ENCODE measurements at regions of chr1 and their contacts with region 1.

Region 1: GRCh38 chr1:173824331-173825081 is at the starts of genes CENPL and DARS2:
- DNase-seq: peak; percentile 67 to 93 (median 91)
- ATAC-seq: peak; percentile 94
- H3K4me3 ChIP-seq: peak within 1 kb of the TSS; percentile 99
- H3K4me3 Mint-ChIP-seq: peak within 1 kb of the TSS; percentile 87 to 99 (median 94)
- H3K27ac ChIP-seq: peak within 1 kb of the TSS; percentile 80
- H3K27ac Mint-ChIP-seq: peak within 1 kb of the TSS; percentile 91 to 98 (median 96)
- H3K4me1 ChIP-seq: peaks cover 10 to 14% of the 10 kb centered on the region in 2 donors
- H3K4me1 Mint-ChIP-seq: peaks cover 32 to 68% (median 50%) of the 10 kb centered on the region in 7 donors
- H3K27me3 ChIP-seq: no peaks in the 10 kb centered on the region
- H3K27me3 Mint-ChIP-seq: no peaks in the 10 kb centered on the region
- total RNA-seq, gene CENPL: 5.2 to 25.1 (median 9.5) TPM
- total RNA-seq, gene DARS2: 3.6 to 26.0 (median 13.5) TPM

Region 2: GRCh38 chr1:172761581-172762025 is 1062.9 kb before region 1 on chr1:
- CTCF ChIA-PET with region 1: no interaction called
- POLR2A ChIA-PET with region 1: no interaction called
- intact Hi-C with region 1: loop called in 1 of 2 experiments (anchors 5 kb)
- DNase-seq: no peak
- ATAC-seq: no peak
- H3K4me3 ChIP-seq: no peak overlapping the region
- H3K4me3 Mint-ChIP-seq: no peak overlapping the region
- H3K27ac ChIP-seq: no peak overlapping the region
- H3K27ac Mint-ChIP-seq: no peak overlapping the region
- H3K4me1 ChIP-seq: peaks cover 0 to 25% of the 10 kb centered on the region in 2 donors
- H3K4me1 Mint-ChIP-seq: peaks cover 3 to 58% (median 44%) of the 10 kb centered on the region in 7 donors
- H3K27me3 ChIP-seq: no peaks in the 10 kb centered on the region
- H3K27me3 Mint-ChIP-seq: peaks cover 0 to 28% (median 0%) of the 10 kb centered on the region in 5 donors

Region 3: GRCh38 chr1:173202430-173203145 is 621.9 kb before region 1 on chr1:
- CTCF ChIA-PET with region 1: no interaction called
- POLR2A ChIA-PET with region 1: no interaction called
- intact Hi-C with region 1: loop called in 1 of 2 experiments (anchors 5 kb)
- DNase-seq: peak in 1 of 9 donors; percentile 8
- ATAC-seq: no peak
- H3K4me3 ChIP-seq: no peak overlapping the region
- H3K4me3 Mint-ChIP-seq: peak overlapping the region in 1 of 10 donors; percentile 26
- H3K27ac ChIP-seq: no peak overlapping the region
- H3K27ac Mint-ChIP-seq: peak overlapping the region in 7 of 9 donors; percentile 1 to 99 (median 43)
- H3K4me1 ChIP-seq: peaks cover 32 to 37% of the 10 kb centered on the region in 2 donors
- H3K4me1 Mint-ChIP-seq: peaks cover 28 to 52% (median 46%) of the 10 kb centered on the region in 7 donors
- H3K27me3 ChIP-seq: no peaks in the 10 kb centered on the region
- H3K27me3 Mint-ChIP-seq: peaks cover 0 to 31% (median 0%) of the 10 kb centered on the region in 5 donors

Region 4: DNA sequence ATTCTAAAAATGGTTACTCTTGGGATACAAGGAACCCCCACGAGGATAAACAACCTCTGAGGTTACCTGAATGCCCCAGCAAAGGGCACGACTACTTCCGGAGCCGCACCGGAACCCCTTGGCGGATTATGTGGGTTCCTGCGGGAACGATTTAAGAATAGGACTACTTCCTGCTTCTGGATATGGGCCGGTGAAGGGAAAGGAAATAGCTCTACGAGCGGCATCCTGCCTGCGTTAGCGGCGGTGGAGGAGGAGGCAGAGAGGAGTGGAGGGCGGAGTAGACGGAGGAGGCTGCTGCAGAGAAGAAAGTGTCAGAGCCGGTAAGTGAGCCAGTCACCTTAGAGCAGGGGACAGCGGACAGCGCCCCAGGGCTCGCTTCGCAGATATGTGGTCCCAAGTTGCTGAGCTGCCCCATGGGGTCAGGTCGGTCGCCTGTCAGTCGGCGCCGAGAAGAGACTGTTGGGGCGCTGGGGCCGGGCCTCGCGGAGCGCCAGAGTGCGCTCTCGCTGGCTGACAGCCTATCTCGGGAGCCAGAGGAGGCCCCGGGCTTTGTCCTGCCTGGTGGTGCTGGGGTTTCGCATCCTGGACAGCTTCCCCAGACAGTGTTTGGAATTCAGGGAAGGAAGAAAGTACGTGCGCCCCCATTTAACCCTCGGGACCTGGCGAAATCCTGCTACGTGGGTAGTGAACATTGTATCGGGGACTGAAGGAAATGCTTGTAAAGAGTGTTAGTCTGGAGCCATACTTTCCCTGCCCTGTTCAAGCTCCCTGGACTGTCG is 109.6 kb before region 1 on chr1 and contains the start of gene KLHL20:
- CTCF ChIA-PET with region 1: no interaction called
- POLR2A ChIA-PET with region 1: interaction called, 6 read pairs
- intact Hi-C with region 1: loop called (anchors 1 kb)
- DNase-seq: peak; percentile 60 to 92 (median 89)
- ATAC-seq: peak; percentile 98
- H3K4me3 ChIP-seq: peak within 1 kb of the TSS; percentile 77
- H3K4me3 Mint-ChIP-seq: peak within 1 kb of the TSS; percentile 90 to 100 (median 96)
- H3K27ac ChIP-seq: peak within 1 kb of the TSS; percentile 78
- H3K27ac Mint-ChIP-seq: peak within 1 kb of the TSS; percentile 89 to 99 (median 94)
- H3K4me1 ChIP-seq: peaks cover 11 to 18% of the 10 kb centered on the region in 2 donors
- H3K4me1 Mint-ChIP-seq: peaks cover 14 to 48% (median 35%) of the 10 kb centered on the region in 7 donors
- H3K27me3 ChIP-seq: no peaks in the 10 kb centered on the region
- H3K27me3 Mint-ChIP-seq: peaks cover 14 to 32% (median 19%) of the 10 kb centered on the region in 5 donors
- total RNA-seq, gene KLHL20: 28.3 to 40.9 (median 32.8) TPM

Region 5: DNA sequence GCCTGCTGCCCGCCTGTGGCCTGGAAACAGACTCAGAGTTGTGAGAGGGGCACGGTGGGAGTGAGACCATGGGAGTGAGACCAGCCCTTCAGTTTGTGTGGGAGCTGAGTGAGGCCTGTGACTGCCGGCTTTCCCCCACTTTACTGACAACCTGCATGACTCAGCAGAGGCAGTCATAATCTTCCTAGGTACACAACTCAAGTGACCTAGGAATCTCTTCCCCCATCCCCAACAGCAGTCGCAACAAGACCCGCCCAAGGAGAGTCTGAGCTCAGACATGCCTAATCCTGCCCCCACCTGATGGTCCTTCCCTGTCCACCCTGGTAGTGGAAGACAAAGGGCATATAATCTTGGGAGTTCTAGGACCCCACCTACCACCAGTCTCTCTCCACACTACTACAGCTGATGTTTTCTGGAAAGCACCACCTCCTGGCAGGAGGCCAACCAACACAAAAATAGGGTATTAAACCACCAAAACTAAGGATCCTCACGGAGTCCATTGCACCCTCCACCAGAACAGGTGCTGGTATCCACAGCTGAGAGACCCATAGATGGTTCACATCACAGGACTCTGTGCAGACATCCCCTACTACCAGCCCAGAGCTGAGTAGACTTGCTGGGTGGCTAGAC is 65.4 kb before region 1 on chr1:
- CTCF ChIA-PET with region 1: no interaction called
- POLR2A ChIA-PET with region 1: no interaction called
- intact Hi-C with region 1: no loop called
- DNase-seq: no peak
- ATAC-seq: no peak
- H3K4me3 ChIP-seq: no peak overlapping the region
- H3K4me3 Mint-ChIP-seq: no peak overlapping the region
- H3K27ac ChIP-seq: no peak overlapping the region
- H3K27ac Mint-ChIP-seq: peak overlapping the region in 5 of 9 donors; percentile 20 to 75 (median 31)
- H3K4me1 ChIP-seq: no peaks in the 10 kb centered on the region
- H3K4me1 Mint-ChIP-seq: peaks cover 0 to 23% (median 4%) of the 10 kb centered on the region in 7 donors
- H3K27me3 ChIP-seq: no peaks in the 10 kb centered on the region
- H3K27me3 Mint-ChIP-seq: no peaks in the 10 kb centered on the region

Region 6: DNA sequence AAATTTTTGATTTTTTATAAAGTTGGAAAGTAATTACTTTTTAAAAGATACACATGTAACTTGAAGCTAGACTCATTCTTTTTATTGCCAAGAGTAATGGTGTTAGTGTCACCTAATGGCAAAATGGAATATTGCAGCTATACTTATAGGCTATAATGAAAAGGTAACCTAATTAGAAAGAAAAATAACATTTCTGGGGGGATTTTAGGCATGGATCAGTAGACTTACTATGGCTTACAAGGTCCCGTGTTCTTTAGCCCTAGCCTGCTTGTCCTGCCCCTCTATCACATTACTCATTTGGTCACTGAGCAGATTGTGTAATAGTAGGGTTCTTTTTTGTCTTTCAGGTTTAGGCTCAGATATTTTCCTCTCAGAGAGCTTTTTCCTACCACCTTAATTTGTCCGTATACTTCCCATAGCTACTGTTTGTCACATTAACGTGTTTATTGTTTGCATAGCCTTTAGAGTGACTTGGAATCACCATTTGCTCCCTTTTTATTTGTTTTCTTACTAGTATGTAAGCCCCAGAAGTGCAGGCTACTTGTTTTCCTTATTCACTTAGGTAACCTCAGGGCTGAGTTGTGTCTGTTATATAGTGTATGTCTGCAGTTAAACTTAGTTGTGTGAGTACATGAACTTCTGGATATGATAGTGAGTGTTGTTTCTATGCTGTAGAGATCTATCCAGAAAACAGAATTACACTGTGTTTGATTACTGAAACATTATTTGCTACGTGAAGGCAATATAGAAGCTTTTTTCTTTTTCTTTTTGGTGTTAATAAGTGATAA is 393.5 kb after region 1 on chr1:
- CTCF ChIA-PET with region 1: no interaction called
- POLR2A ChIA-PET with region 1: no interaction called
- intact Hi-C with region 1: loop called in 1 of 2 experiments (anchors 1 kb)
- DNase-seq: peak in 6 of 9 donors; percentile 2 to 46 (median 34)
- ATAC-seq: peak; percentile 69
- H3K4me3 ChIP-seq: no peak overlapping the region
- H3K4me3 Mint-ChIP-seq: no peak overlapping the region
- H3K27ac ChIP-seq: no peak overlapping the region
- H3K27ac Mint-ChIP-seq: no peak overlapping the region
- H3K4me1 ChIP-seq: no peaks in the 10 kb centered on the region
- H3K4me1 Mint-ChIP-seq: peaks cover 0 to 8% (median 0%) of the 10 kb centered on the region in 7 donors
- H3K27me3 ChIP-seq: no peaks in the 10 kb centered on the region
- H3K27me3 Mint-ChIP-seq: no peaks in the 10 kb centered on the region